ENCODE measurements at regions of chr19 and their contacts with region 1.

Region 1: DNA sequence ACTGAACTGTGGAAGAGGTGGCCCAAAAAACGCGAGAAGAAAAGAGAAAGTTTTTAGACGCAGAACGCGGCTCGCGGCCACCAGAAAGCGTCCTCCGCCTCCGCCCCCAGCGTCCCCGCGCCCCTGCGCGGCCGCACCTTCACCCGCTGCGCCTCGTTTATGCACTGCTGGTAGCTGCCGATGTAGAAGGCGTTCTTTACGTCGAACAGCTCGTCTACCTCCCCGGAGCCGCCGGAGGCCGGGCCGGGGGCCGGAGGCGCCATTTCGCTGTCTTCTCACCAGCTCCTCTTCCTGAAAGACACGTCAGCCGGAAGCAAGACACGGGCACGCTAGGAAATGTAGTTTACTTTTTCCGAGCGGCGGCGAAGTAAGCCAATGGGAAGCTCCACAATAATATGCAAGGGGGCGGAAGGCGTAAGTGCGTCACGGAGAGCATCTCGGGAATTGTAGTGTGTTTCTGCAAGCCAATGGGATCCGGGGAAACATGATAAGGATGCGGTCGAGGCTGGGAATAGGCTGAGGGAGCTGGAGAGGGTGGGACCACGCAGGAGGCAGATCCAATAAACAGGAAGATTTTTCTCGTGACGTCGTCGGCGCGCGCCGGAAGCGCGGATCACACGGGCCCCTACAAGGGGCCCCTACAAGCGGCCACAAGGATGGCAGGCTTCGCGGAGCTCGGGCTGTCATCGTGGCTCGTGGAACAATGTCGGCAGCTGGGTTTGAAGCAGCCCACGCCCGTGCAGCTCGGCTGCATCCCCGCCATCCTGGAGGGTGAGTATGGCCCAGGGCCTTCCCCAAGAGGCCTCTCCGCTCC is at the starts of genes COPE and DDX49:
- DNase-seq: peak; percentile 97
- ATAC-seq: peak; percentile 96
- H3K4me3 ChIP-seq: peak within 1 kb of the TSS; percentile 79 to 87
- H3K27ac ChIP-seq: peak within 1 kb of the TSS; percentile 80
- H3K4me1 ChIP-seq: 0 out of 2 replicates have a peak, but pooled peaks cover 2% of the 10 kb centered on the region
- H3K27me3 ChIP-seq: no peaks in the 10 kb centered on the region
- CTCF ChIP-seq: no peak
- total RNA-seq, gene COPE: 177 TPM
- total RNA-seq, gene DDX49: 41.5 TPM

Region 2: GRCh38 chr19:17725422-17726078 is 1193.7 kb before region 1 on chr19:
- CTCF ChIA-PET with region 1: no interaction called
- POLR2A ChIA-PET with region 1: no interaction called
- in situ Hi-C with region 1: no loop called
- intact Hi-C with region 1: no loop called
- DNase-seq: no peak
- ATAC-seq: no peak
- H3K4me3 ChIP-seq: no peak overlapping the region
- H3K27ac ChIP-seq: no peak overlapping the region
- H3K4me1 ChIP-seq: peaks cover 6% of the 10 kb centered on the region
- H3K27me3 ChIP-seq: no peaks in the 10 kb centered on the region
- CTCF ChIP-seq: peak; percentile 73

Region 3: DNA sequence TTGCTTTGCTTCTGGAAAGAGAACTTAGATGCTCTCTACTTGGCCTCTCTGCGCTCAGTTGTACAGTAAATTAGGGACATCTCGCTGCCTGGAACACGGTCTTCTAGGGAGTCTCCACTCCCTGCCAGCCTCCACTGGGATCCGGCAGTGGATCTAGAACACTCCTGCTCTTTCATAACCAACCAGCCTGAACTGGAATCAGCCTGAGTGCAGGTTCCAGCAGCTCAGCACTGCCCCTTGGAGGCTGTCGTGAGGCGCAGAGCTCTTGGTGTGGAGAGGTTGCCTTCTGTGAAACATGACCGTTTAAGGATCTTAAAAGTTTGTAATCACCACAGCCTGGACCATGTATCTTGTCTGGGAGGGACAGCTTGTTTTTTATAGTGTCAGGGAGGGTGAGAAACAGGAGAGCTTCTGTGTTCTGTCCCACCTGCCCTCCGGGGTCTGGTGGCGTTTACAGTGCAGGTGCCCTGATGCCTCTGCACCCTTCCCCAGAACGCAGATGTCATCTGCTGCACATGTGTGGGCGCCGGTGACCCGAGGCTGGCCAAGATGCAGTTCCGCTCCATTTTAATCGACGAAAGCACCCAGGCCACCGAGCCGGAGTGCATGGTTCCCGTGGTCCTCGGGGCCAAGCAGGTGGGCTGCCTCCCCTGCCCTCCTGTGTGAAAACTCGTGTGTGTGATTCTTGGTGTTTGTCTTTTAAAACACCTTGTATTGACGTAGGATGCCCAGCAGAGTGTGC is 62.7 kb before region 1 on chr19:
- CTCF ChIA-PET with region 1: no interaction called
- POLR2A ChIA-PET with region 1: no interaction called
- in situ Hi-C with region 1: no loop called
- intact Hi-C with region 1: no loop called
- DNase-seq: no peak
- ATAC-seq: peak; percentile 69; the same call in 1 of the 2 replicates
- H3K4me3 ChIP-seq: no peak overlapping the region
- H3K27ac ChIP-seq: no peak overlapping the region
- H3K4me1 ChIP-seq: no peaks in the 10 kb centered on the region
- H3K27me3 ChIP-seq: no peaks in the 10 kb centered on the region
- CTCF ChIP-seq: no peak; the same call in 1 of the 2 replicates

Region 4: DNA sequence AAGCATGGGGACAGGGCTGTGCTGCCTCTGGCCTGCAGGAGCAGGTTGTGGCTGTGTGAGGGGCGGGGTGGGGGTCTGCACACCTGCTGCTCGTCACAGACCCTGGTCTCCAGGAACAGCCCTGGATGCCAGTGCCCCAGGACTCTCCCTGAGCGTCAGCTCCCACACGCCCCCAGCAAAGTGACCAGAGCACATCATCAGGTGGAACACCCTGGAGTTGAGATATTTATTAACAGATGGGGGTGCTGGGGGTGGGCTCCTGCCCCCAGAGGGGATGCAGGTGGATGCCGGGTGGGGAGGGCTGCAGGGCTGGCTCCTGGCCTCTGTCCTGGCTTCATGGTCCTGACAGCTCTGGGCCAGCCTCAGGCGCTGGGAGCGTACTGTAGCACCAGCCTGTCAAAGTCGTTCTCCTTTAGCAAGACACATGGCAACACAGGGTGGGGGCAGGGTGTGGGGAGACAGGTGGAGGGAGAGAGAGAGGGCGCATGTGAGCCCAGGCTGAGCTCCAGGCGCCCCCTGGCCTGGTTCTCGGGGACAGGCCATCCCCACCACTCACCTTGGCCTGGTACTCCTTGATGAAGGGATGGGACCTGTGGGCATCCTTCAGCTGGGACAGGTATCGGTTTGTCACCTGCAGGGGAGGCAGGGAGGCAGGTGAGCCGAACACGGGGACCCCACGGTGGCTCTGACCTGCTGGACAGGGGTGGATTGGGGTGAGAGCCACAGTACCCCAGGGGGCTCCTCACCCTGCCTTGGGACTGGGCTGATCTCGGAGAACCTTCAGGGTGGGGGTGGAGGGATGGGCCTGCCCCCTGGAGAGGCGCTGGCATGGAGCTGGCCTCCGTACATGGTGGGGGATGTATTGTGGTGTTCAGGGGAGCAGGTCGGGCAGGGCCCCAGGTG is 19.7 kb before region 1 on chr19:
- CTCF ChIA-PET with region 1: interaction called, 6 read pairs
- POLR2A ChIA-PET with region 1: interaction called, 11 read pairs
- in situ Hi-C with region 1: no loop called
- intact Hi-C with region 1: no loop called
- DNase-seq: no peak
- ATAC-seq: no peak
- H3K4me3 ChIP-seq: no peak overlapping the region
- H3K27ac ChIP-seq: no peak overlapping the region
- H3K4me1 ChIP-seq: no peaks in the 10 kb centered on the region; the same call in 1 of the 2 replicates
- H3K27me3 ChIP-seq: no peaks in the 10 kb centered on the region
- CTCF ChIP-seq: no peak

Region 5: GRCh38 chr19:18975869-18976268 is 56.6 kb after region 1 on chr19:
- CTCF ChIA-PET with region 1: no interaction called
- POLR2A ChIA-PET with region 1: interaction called, 12 read pairs
- in situ Hi-C with region 1: no loop called
- intact Hi-C with region 1: no loop called
- DNase-seq: no peak
- ATAC-seq: no peak
- H3K4me3 ChIP-seq: no peak overlapping the region
- H3K27ac ChIP-seq: no peak overlapping the region
- H3K4me1 ChIP-seq: peaks cover 9% of the 10 kb centered on the region
- H3K27me3 ChIP-seq: no peaks in the 10 kb centered on the region
- CTCF ChIP-seq: no peak

Region 6: GRCh38 chr19:19063183-19064097 is 144.1 kb after region 1 on chr19 and contains the start of gene SLC25A42:
- CTCF ChIA-PET with region 1: no interaction called
- POLR2A ChIA-PET with region 1: no interaction called
- in situ Hi-C with region 1: no loop called
- intact Hi-C with region 1: no loop called
- DNase-seq: peak; percentile 95
- ATAC-seq: peak; percentile 95
- H3K4me3 ChIP-seq: peak within 1 kb of the TSS; percentile 52 to 61
- H3K27ac ChIP-seq: peak within 1 kb of the TSS; percentile 78
- H3K4me1 ChIP-seq: peaks cover 15% of the 10 kb centered on the region
- H3K27me3 ChIP-seq: no peaks in the 10 kb centered on the region
- CTCF ChIP-seq: no peak
- total RNA-seq, gene SLC25A42: 2.6 TPM